Activated T-helper 2 cell treated with anti-CD3 and anti-CD28 coated beads, Interferon-gamma antibody, Interleukin-2, Interleukin-4, amounts not matched to agents 10 μg/mL and 5 μg/mL and 100 μg/mL, durations not matched to agents 14 hours and 24 hours and 36 hours (primary cell): ENCODE measurements at regions of chr3 and their contacts with region 1.

Region 1: DNA sequence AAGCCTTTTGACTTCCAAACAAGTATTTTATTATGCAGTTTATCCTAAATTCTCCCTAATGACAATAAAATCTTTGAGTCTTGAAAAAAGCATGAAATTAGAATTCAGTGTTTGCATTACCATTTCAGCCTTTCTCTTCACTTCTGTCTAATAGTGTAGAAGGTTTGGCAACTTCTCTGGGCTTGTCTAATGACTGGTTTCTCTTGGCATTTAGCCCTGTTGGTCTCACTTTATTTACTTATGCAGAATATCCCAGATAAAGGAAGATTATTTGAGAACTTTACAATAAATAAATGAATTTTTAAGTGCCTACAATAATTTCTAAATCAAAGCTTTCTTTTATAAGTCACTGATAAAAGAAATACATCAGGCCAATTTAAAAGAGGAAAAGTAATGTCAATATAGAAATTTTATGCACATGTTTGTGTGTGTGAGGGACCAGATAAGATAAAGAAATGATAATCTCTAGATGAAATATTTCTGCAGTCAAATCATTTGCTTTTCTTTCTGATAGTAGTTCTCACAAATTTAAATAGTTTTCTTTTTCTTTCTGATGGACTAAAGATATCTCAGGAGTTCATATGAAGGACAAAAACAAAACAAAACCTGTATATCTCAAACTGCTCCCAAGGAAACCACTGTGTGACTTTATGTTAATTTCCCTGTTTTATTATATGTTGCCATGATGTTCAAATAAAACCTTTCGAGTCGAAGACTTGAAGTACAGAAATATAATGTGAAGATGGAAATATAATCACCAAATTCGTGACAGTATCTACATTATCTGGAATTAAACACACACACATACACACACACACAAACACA is 533.1 kb upstream of the CBLB start:
- DNase-seq: no peak
- H3K4me3 Mint-ChIP-seq: no peak overlapping the region
- H3K27ac Mint-ChIP-seq: no peak overlapping the region
- H3K4me1 Mint-ChIP-seq: peaks cover 5% of the 10 kb centered on the region
- H3K27me3 Mint-ChIP-seq: no peaks in the 10 kb centered on the region

Region 2: GRCh38 chr3:106364477-106364876 is 37.4 kb before region 1 on chr3:
- intact Hi-C with region 1: loop called (anchors 5 kb)
- DNase-seq: no peak
- H3K4me3 Mint-ChIP-seq: no peak overlapping the region
- H3K27ac Mint-ChIP-seq: no peak overlapping the region
- H3K4me1 Mint-ChIP-seq: peaks cover 7% of the 10 kb centered on the region
- H3K27me3 Mint-ChIP-seq: no peaks in the 10 kb centered on the region